Cardiac septum (tissue), 1 donor: ENCODE measurements at regions of chr6 and their contacts with region 1.

Region 1: DNA sequence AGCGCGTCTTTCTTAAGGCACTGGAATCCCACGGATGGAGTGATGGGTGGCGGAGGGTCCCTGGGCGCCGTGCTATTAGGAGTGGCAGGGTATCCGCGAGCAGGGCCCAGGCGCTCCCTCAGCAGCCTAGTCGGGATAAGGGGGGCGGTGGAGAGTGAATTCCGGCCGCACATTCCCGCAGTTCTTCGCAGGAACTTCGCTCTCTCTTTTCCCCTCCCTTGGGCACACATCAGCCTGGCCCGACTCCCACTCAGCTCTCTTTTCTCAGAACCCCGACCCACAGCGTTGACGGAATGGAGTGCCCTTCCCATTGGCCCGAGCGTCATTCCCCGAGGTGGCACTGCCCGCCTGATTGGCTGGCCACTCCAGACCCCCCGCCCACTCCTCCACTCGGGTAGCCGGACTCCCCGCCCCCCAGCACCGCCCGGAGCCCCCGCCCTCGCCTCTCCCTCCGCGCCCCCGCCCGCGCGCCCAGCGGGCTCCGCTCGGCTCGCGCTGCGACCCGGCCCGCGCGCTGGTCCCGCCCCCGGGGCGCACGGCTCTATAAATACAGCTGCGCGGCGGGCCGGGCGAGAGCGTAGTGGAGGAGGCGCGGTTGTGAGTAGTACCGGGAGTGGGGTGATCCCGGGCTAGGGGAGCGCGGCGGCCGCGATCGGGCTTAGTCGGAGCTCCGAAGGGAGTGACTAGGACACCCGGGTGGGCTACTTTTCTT is at the start of gene ID4:
- DNase-seq: peak; percentile 92
- total RNA-seq, gene ID4: 6.8 TPM

Region 2: DNA sequence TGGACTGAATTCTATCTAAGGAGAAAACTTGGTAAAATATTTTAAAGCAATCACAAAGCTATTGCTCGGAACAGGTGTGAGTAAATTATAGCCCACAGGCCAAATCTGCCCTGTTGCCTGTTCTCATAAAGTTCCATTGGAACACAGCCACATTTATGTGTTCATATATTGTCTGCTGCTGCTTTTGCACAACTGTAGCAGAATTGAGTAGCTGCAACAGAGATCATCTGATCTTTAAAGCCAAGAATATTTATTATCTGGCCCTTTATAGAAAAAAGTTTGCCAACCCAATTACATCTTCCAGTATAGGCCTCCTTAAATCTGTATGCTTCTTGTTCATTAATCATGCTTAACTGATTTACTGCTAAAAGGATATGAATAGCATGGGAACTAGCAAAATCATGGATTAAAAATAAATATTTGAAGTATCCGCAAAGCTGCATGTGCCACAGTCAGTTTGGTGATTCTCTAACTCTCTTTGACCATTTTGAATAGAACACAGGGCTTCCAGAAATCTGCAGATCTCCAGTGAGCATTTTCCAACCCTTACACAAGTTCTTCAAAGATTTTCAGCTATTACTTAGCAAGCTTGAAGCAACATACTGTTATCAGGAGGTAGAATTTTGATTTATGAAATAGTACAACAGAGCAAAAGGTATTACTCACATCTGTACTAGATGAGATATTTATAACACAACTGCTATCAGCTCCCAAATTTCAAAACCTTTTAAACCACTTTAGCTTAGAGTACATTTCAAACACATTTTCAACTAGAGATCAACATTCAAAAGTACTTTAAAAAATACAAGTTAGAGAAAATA is 312.4 kb before region 1 on chr6:
- intact Hi-C with region 1: no loop called
- DNase-seq: no peak

Region 3: DNA sequence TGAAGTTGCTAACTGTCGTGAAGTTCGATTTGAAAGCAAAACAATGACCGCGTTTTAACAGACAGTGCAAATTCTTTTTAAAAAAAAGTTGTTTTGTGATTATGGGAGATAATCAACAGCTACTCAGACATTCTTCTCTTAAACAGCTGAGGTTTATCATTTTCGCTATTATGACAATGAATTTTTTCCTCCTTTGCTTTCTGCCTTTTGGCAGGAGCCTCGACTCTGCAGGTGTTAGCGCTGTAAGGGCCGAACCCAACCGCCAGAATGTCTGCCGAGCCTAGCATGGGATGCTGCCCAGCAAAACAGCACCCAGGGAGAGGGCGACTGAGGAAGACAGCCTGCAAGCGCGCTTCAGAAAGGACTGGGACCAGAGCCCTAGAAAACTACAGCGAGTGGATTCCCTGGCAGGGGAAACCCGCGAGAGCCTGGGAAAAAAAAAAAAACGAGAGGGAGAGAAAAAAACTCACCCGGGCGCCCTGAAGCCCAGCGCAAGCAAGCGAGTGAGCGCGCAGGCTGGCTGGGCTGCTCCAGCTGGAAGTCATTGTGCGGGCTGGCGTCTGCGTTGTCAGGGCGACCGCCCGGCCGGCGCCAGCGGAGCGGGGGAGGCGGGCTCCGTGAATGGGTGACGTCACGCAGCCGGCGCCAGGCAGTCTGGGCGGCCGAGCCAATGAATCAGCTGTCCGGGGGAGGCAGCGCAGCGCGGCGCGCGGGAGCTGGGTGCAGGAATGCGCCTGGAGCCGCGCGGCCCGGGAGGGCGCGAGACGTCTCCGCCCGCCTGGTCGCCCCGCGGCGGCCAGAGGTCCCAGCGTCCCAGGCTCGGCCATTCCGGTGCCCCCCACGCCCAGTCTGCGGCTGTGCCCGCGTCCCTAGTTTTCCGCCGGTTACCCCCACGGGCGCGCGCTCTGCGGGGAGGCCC is 32.5 kb before region 1 on chr6:
- intact Hi-C with region 1: loop called (anchors 2 kb)
- DNase-seq: peak; percentile 97